Mammary epithelial cell (primary cell): ENCODE measurements at regions of chr10 and their contacts with region 1.

Region 1: GRCh38 chr10:96339957-96340904 is 18.6 kb downstream of the OPALIN start:
- DNase-seq: peak; percentile 54
- H3K4me3 ChIP-seq: no peak overlapping the region
- H3K27ac ChIP-seq: no peak overlapping the region
- H3K4me1 ChIP-seq: no peaks in the 10 kb centered on the region
- H3K27me3 ChIP-seq: no peaks in the 10 kb centered on the region
- CTCF ChIP-seq: peak; percentile 84 to 89

Region 2: GRCh38 chr10:96017191-96017687 is 323.0 kb before region 1 on chr10:
- CTCF ChIA-PET with region 1: interaction called, 3 read pairs
- dilution Hi-C with region 1: no loop called
- in situ Hi-C with region 1: loop called in 1 of 2 experiments (anchors 25 kb)
- intact Hi-C with region 1: loop called (anchors 1 kb)
- DNase-seq: peak; percentile 52
- H3K4me3 ChIP-seq: no peak overlapping the region
- H3K27ac ChIP-seq: no peak overlapping the region
- H3K4me1 ChIP-seq: no peaks in the 10 kb centered on the region
- H3K27me3 ChIP-seq: peaks cover 7% of the 10 kb centered on the region
- CTCF ChIP-seq: peak; percentile 73 to 75

Region 3: DNA sequence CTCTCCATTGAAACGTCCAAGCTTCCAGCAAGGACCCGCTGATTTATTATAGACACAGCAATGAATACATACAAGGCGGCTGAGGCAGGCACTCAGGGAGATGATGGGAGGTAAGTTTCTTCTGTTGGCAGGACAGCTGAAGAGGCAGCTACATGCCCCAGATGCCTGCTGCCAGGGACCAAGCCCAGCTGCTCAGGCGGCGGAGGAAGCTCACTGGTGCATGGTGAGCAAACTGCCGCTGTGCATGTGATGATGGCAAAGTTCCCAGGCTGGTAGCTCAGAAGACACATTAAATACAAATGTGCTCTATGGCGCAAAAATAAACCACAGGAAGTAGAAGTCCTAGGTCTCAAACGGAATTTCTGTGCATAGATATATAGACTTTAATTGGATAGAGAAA is 33.7 kb before region 1 on chr10:
- CTCF ChIA-PET with region 1: no interaction called
- dilution Hi-C with region 1: loop called (anchors 5 kb)
- in situ Hi-C with region 1: no loop called
- intact Hi-C with region 1: no loop called
- DNase-seq: no peak
- H3K4me3 ChIP-seq: no peak overlapping the region
- H3K27ac ChIP-seq: no peak overlapping the region
- H3K4me1 ChIP-seq: no peaks in the 10 kb centered on the region
- H3K27me3 ChIP-seq: no peaks in the 10 kb centered on the region
- CTCF ChIP-seq: no peak